ENCODE measurements at regions of chr5 and their contacts with region 1.

Region 1: DNA sequence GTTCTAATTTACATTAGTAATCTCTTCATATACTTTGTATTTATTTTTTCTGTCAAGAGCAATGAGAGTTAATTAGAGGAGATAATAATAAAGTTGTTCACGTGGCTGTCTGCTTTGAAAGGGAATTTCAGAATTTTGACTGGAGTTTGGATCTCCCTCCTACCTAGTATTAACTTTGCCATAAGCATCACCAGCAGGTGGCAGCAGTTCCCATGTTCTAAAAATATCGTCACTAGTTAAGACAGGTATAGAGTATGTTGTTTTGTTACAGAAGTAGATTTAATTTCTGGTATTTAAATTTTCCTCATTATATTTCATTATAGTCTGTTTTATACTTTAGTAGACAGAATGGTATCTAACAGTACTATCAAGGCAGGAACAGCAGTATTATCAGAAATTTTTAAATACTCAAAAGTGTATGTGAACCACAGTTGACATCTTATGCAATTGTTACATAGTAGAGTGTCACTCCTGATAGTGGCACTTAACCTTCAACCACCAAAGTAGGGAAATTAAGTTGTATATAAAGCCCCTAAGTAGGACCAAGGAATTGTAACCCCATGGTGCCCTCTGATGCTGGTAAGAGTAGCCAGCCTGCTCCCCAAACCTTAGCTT is 20.4 kb downstream of the GNPDA1 start:
- DNase-seq: peak; percentile 76
- H3K4me3 ChIP-seq: no peak overlapping the region
- H3K27ac ChIP-seq: no peak overlapping the region
- H3K4me1 ChIP-seq: no peaks in the 10 kb centered on the region
- H3K27me3 ChIP-seq: no peaks in the 10 kb centered on the region
- CTCF ChIP-seq: peak; percentile 73 to 82 (median 81)
- POLR2A ChIP-seq: no peak

Region 2: DNA sequence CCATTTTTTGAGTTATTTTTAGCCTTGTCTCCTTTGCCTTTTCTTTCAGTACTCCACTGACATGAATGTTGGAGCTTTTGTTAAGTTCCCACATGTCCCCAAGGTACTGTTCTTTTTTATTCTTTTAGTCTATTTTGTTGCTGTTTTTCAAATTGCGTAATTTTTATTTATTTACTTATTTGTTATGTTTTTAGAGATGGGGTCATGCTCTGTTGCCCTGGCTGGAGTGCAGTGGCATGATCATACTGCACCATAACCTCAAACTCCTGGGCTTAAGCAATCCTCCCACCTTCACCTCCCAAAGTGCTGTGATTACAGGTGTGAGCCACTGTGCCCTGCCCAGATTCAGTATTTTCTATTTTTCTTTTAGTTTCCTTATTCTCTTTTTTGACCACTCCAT is 1211.9 kb before region 1 on chr5:
- intact Hi-C with region 1: no loop called
- DNase-seq: no peak
- H3K4me3 ChIP-seq: no peak overlapping the region
- H3K27ac ChIP-seq: no peak overlapping the region
- H3K4me1 ChIP-seq: no peaks in the 10 kb centered on the region
- H3K27me3 ChIP-seq: no peaks in the 10 kb centered on the region
- CTCF ChIP-seq: no peak
- POLR2A ChIP-seq: no peak

Region 3: DNA sequence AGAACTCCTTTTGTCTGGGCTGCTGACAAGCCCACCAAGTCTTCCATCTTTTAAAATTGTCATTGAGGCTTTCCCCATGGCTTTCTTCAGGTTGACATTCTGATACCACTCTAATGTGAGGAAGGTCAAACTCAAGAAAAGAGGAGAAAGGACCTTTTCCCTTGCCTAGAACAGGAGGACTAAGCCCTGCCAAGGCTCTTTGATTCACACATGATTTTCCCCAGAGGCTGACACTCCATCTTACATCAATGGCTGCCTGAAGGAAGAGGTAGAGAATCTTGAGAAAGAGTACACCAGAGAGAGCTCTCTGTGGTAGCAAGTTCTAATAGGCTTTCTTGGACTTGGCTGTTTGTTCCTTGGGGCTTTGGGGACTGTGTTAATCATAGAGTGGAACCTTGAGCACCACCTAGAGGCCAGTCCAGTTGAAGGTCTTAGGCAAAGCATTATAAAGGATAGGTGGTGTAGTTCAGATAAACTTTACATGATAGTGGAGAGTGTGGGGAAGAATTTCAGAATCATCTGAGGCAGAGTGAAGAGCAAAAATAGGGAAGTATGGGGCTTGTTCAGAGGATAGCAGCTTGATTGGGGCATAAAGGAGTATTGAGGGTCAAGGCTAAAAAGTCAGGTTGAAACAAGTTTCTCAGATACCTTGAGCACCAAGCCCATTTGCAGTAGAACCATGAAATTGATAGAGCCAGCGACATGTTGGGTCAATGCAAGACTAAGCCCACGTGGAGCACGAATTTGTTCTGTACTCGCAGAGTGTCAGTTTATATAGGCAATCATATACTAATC is 152.8 kb after region 1 on chr5:
- intact Hi-C with region 1: loop called (anchors 2 kb)
- DNase-seq: peak; percentile 58
- H3K4me3 ChIP-seq: no peak overlapping the region
- H3K27ac ChIP-seq: no peak overlapping the region
- H3K4me1 ChIP-seq: no peaks in the 10 kb centered on the region
- H3K27me3 ChIP-seq: no peaks in the 10 kb centered on the region
- CTCF ChIP-seq: peak; percentile 42 to 70 (median 58)
- POLR2A ChIP-seq: no peak